Mammary epithelial cell (primary cell): ENCODE measurements at regions of chr22 and their contacts with region 1.

Region 1: GRCh38 chr22:24516301-24516737 is 21.2 kb downstream of the UPB1 start:
- DNase-seq: peak; percentile 63
- H3K4me3 ChIP-seq: no peak overlapping the region
- H3K27ac ChIP-seq: no peak overlapping the region
- H3K4me1 ChIP-seq: peaks cover 6% of the 10 kb centered on the region
- H3K27me3 ChIP-seq: no peaks in the 10 kb centered on the region
- CTCF ChIP-seq: peak in 1 of 2 donors; percentile 2

Region 2: GRCh38 chr22:23826465-23827199 is 689.7 kb before region 1 on chr22:
- CTCF ChIA-PET with region 1: no interaction called
- dilution Hi-C with region 1: no loop called
- in situ Hi-C with region 1: no loop called
- intact Hi-C with region 1: no loop called
- DNase-seq: no peak
- H3K4me3 ChIP-seq: no peak overlapping the region
- H3K27ac ChIP-seq: no peak overlapping the region
- H3K4me1 ChIP-seq: peaks cover 27% of the 10 kb centered on the region
- H3K27me3 ChIP-seq: no peaks in the 10 kb centered on the region
- CTCF ChIP-seq: no peak

Region 3: DNA sequence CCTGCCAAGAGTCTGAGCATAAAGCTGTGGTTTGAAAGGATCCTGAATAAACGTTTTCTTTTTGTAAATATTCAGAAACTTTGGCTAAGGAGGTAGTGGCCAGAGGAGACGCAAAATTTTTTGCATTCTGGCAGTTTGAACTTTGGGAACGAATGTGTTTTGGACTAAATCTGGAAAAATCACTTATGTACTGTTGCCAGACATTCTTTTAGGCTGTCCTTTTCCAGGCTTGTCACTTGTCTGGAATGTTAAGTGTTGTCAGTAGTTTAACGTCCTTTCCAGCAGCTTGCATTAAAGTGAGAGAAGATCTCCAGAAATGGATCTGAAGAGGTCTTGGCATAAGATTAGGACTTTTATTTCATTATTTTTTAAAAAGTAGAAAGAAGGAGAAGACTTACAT is 227.2 kb before region 1 on chr22:
- CTCF ChIA-PET with region 1: no interaction called
- dilution Hi-C with region 1: loop called (anchors 10 kb)
- in situ Hi-C with region 1: no loop called
- intact Hi-C with region 1: no loop called
- DNase-seq: no peak
- H3K4me3 ChIP-seq: no peak overlapping the region
- H3K27ac ChIP-seq: peak overlapping the region; percentile 2
- H3K4me1 ChIP-seq: peaks cover 26% of the 10 kb centered on the region
- H3K27me3 ChIP-seq: no peaks in the 10 kb centered on the region
- CTCF ChIP-seq: no peak